ENCODE measurements at regions of chr7 and their contacts with region 1.

Region 1: DNA sequence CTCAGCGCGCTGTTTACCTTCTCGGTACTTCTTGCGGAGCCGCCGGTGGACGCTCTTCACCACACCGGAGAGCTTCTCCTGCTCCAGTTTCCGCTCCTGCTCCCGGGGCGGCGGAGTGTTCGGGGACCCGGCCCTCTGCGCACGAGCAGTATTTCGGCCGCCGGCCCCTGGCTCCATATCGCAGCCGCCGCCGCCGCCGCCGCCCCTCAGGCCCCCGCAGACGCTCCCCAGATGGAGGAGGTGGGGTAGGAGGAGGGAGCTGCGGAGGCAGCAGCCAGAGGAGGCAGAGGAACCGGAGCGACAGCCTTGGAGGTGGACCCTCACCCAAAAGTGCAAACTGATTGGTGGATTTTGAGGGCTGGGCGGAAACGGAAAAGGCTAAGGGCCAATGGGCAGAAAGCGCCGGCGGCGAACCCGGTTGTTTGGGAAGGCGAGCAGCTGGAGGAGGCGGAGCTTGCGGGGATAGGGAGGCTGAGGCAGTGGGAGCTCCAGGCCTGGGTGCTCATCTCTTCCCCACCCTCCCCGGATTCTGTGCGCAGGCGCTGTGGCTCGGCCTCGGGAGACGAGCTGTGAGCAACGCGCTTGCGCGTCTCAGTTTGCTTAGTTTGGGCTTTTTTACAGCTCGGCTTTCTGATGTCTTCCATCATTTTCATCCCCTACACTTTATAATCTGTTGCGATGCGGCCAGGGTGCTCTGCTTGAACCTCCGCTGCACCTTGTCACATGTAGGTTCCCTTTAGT is 146.9 kb downstream of the GPR85 start:
- DNase-seq: peak; percentile 98
- H3K4me3 Mint-ChIP-seq: peak overlapping the region; percentile 94
- H3K27ac Mint-ChIP-seq: peak overlapping the region; percentile 84
- H3K4me1 Mint-ChIP-seq: peaks cover 17% of the 10 kb centered on the region
- H3K27me3 Mint-ChIP-seq: no peaks in the 10 kb centered on the region
- CTCF ChIP-seq: no peak

Region 2: GRCh38 chr7:112819536-112819935 is 120.2 kb before region 1 on chr7:
- CTCF ChIA-PET with region 1: interaction called, 12 read pairs
- intact Hi-C with region 1: no loop called
- DNase-seq: no peak
- H3K4me3 Mint-ChIP-seq: no peak overlapping the region
- H3K27ac Mint-ChIP-seq: no peak overlapping the region
- H3K4me1 Mint-ChIP-seq: no peaks in the 10 kb centered on the region
- H3K27me3 Mint-ChIP-seq: no peaks in the 10 kb centered on the region
- CTCF ChIP-seq: no peak

Region 3: DNA sequence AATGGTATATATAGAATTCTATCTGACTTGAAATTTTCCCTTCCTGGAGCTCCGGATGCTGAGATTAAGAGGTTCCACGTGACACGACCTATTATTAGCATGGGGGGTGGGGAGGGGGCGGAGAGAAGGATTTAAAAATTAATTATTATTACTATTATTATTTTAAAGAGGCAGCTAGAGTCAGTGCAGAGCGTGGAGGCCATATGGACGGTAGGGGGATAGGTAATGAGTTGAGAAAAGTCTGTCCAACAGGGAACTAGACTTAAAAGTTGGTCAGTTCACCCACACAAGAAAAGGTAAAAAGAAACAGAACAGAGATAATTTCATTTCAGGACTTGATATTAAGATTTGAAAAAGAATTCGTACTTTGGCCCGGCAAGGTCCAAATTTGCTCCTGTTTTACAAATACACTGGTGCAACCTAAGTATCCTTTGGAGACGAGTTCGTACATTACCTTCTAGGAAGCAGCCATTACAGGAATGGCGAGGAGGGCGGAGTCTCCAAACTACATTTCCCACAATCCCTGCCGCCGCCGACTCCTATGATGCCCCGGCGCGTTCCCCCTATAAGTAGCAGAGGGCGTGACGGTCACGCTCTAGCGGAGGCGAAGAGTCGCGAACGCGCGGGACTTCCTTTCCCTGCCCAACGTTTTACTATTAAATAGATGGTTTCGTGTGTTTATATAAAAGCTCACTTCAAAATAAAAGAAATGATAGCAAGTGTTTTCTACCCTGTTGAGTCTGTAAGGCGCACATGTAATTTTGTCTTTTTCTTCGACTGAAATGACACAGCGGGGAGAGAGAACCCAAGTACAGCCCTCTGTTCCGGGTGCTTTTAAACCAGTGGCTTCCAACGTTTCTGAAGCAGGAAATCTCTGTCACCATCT is 178.6 kb after region 1 on chr7 and contains the start of gene SMIM30:
- CTCF ChIA-PET with region 1: no interaction called
- intact Hi-C with region 1: loop called (anchors 10 kb)
- DNase-seq: peak; percentile 85
- H3K4me3 Mint-ChIP-seq: peak within 1 kb of the TSS; percentile 80
- H3K27ac Mint-ChIP-seq: peak within 1 kb of the TSS; percentile 73
- H3K4me1 Mint-ChIP-seq: no peaks in the 10 kb centered on the region
- H3K27me3 Mint-ChIP-seq: no peaks in the 10 kb centered on the region
- CTCF ChIP-seq: no peak
- total RNA-seq, gene SMIM30: 35.9 and 42.2 TPM in 2 replicates